ENCODE measurements at regions of chr10 and their contacts with region 1.

Region 1: GRCh38 chr10:71850637-71851464 is at the start of gene PSAP:
- DNase-seq: peak; percentile 100
- ATAC-seq: peak; percentile 96
- H3K4me3 ChIP-seq: peak within 1 kb of the TSS; percentile 69
- H3K27ac ChIP-seq: peak within 1 kb of the TSS; percentile 86
- H3K4me1 ChIP-seq: peaks cover 46% of the 10 kb centered on the region in 2 experiments
- H3K27me3 ChIP-seq: no peaks in the 10 kb centered on the region
- CTCF ChIP-seq: no peak
- EP300 ChIP-seq: peak; percentile 55; the same call in 1 of the 2 replicates
- POLR2A ChIP-seq: peak; percentile 97
- RAD21 ChIP-seq: no peak; a peak in 1 of 4 replicates
- polyA plus RNA-seq, gene PSAP: 429 to 700 TPM

Region 2: GRCh38 chr10:71799608-71800453 is 51.0 kb before region 1 on chr10:
- CTCF ChIA-PET with region 1: no interaction called
- POLR2A ChIA-PET with region 1: no interaction called
- in situ Hi-C with region 1: no loop called
- intact Hi-C with region 1: no loop called
- DNase-seq: no peak
- ATAC-seq: no peak
- H3K4me3 ChIP-seq: no peak overlapping the region
- H3K27ac ChIP-seq: no peak overlapping the region
- H3K4me1 ChIP-seq: peaks cover 22 to 30% of the 10 kb centered on the region in 2 experiments
- H3K27me3 ChIP-seq: no peaks in the 10 kb centered on the region
- CTCF ChIP-seq: no peak
- EP300 ChIP-seq: no peak
- POLR2A ChIP-seq: no peak
- RAD21 ChIP-seq: no peak

Region 3: DNA sequence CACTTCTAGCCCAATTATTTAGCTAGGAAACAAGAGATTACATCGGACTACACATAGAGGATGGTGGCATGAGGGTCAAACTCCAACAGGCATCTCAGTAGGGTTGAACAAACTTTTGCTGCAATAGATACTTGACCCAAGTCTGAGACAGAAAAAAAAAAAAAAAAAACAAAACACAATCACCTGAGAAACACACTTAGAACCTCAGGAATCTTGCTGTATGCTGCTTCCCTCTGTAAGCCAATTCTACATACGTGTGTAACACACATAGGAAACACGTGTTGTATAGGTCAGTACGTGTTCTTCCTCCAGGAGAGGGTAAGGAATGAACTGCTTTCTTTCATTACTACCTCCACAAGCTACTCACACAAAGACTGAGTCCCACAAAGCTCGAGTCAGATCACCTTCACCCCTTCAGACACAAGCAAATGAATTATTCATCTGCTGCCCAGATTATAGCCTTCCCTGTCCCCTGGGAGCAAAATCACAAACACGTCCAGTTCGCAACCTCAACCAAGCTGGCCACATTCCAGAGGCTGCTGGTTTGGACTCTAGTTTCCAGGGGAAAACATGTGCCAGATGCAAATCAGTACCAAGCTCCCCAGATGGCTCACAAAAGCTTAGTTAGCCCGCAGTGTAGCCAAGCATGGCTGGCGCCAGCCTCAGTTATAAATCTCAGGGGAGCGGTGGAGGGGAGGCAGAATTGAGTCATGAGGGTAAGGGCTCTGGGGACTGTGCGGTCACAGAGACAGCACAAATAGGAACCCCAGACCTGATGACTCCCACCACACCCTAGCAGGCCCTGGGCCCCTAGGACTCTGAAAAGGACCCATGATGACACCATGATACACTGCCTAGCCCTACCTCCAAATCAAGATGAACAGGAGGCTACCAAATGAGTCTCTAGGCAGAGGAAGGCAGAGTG is 14.9 kb before region 1 on chr10:
- CTCF ChIA-PET with region 1: interaction called, 4 read pairs
- POLR2A ChIA-PET with region 1: interaction called, 97 read pairs
- in situ Hi-C with region 1: no loop called
- intact Hi-C with region 1: no loop called
- DNase-seq: no peak
- ATAC-seq: no peak
- H3K4me3 ChIP-seq: no peak overlapping the region
- H3K27ac ChIP-seq: no peak overlapping the region
- H3K4me1 ChIP-seq: peaks cover 23 to 40% of the 10 kb centered on the region in 2 experiments; a peak in 4 of 5 replicates
- H3K27me3 ChIP-seq: no peaks in the 10 kb centered on the region
- CTCF ChIP-seq: no peak
- EP300 ChIP-seq: no peak
- POLR2A ChIP-seq: no peak
- RAD21 ChIP-seq: no peak

Region 4: GRCh38 chr10:71873582-71874211 is 22.8 kb after region 1 on chr10:
- CTCF ChIA-PET with region 1: interaction called, 4 read pairs
- POLR2A ChIA-PET with region 1: interaction called, 20 read pairs
- in situ Hi-C with region 1: no loop called
- intact Hi-C with region 1: no loop called
- DNase-seq: no peak
- ATAC-seq: no peak
- H3K4me3 ChIP-seq: no peak overlapping the region
- H3K27ac ChIP-seq: no peak overlapping the region
- H3K4me1 ChIP-seq: peaks cover 12 to 40% of the 10 kb centered on the region in 2 experiments
- H3K27me3 ChIP-seq: no peaks in the 10 kb centered on the region
- CTCF ChIP-seq: no peak
- EP300 ChIP-seq: no peak
- POLR2A ChIP-seq: no peak
- RAD21 ChIP-seq: no peak

Region 5: GRCh38 chr10:71882813-71883659 is 32.2 kb after region 1 on chr10:
- CTCF ChIA-PET with region 1: no interaction called
- POLR2A ChIA-PET with region 1: interaction called, 20 read pairs
- in situ Hi-C with region 1: no loop called
- intact Hi-C with region 1: loop called (anchors 2 kb)
- DNase-seq: peak in 3 of 4 experiments; percentile 48 to 77 (median 58)
- ATAC-seq: peak; percentile 56
- H3K4me3 ChIP-seq: no peak overlapping the region
- H3K27ac ChIP-seq: peak overlapping the region; percentile 40
- H3K4me1 ChIP-seq: peaks cover 23 to 33% of the 10 kb centered on the region in 2 experiments
- H3K27me3 ChIP-seq: no peaks in the 10 kb centered on the region
- CTCF ChIP-seq: no peak
- EP300 ChIP-seq: peak; percentile 88
- POLR2A ChIP-seq: no peak
- RAD21 ChIP-seq: no peak; a peak in 1 of 4 replicates

Region 6: DNA sequence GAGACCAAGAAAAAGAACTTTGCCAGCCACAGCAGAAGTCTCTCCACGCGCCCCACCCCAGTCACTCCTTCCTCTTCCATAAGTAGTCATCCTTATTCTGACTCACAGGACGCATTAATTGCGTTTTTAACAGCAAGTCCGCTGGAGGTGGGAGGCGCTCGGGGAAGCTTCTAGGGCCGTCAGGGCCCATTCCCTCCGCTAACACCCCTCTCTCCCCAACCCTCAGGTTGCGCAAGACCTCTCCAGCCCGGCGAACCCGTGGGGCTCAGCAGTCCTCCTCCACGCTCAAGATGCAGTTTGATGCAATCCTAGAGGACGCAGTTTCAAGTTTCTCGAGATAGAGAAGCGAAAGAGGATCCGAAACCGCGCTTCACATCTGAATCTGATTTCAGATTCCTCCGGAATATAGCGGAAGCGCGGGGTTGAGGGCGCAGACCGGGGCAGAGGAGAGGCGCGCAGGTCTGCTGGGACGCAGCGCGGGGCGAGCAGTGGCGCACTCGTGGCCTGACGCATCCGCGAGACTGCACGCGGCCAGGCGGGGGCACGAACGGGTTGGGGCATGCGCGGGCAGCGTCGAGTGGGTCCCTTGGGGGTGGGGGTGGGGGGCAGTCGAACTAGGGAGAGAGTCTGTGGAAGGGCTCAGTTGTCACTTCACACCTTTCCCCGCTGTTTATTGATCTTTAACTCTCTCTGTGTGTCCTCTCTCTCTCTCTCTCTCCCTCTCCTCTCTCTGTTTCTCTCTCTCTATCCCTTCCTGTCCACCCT is 38.0 kb after region 1 on chr10:
- CTCF ChIA-PET with region 1: no interaction called
- POLR2A ChIA-PET with region 1: interaction called, 11 read pairs
- in situ Hi-C with region 1: no loop called
- intact Hi-C with region 1: loop called (anchors 2 kb)
- DNase-seq: peak; percentile 76 to 88 (median 84)
- ATAC-seq: peak; percentile 91
- H3K4me3 ChIP-seq: peak overlapping the region; percentile 47
- H3K27ac ChIP-seq: peak overlapping the region; percentile 76
- H3K4me1 ChIP-seq: peaks cover 25 to 35% of the 10 kb centered on the region in 2 experiments
- H3K27me3 ChIP-seq: no peaks in the 10 kb centered on the region
- CTCF ChIP-seq: peak; percentile 13 to 66 (median 36); a peak in 4 of 6 replicates
- EP300 ChIP-seq: 0 out of 2 replicates have a peak, but pooled peaks have one; percentile 22
- POLR2A ChIP-seq: peak; percentile 74
- RAD21 ChIP-seq: peak; percentile 33 to 38

Measured in K562 (cell line).